Caki2 (cell line): ENCODE measurements at regions of chr4 and their contacts with region 1.

Region 1: GRCh38 chr4:140153718-140154571 is at the start of gene MAML3:
- DNase-seq: peak; percentile 93
- total RNA-seq, gene MAML3: 0.20 and 0.61 TPM in 2 replicates

Region 2: DNA sequence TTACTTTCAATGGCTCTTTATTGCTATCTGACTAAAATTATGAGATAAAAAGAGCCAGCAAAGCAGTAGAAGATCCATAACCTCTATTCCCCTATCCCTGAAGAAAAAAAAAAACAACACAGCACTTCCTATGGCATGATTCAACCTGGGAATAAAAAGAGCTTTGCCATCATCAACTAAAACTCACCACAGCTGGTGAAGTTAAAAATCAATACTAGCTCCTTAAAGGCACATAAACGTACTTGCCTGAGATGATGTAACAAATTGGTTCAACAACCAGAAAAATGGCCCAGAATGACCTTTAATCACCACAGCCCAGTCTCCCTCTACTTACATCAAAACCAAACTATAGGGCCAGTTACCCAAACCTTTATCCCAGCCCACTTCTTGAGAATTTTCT is 153.7 kb before region 1 on chr4:
- in situ Hi-C with region 1: no loop called
- DNase-seq: no peak

Region 3: DNA sequence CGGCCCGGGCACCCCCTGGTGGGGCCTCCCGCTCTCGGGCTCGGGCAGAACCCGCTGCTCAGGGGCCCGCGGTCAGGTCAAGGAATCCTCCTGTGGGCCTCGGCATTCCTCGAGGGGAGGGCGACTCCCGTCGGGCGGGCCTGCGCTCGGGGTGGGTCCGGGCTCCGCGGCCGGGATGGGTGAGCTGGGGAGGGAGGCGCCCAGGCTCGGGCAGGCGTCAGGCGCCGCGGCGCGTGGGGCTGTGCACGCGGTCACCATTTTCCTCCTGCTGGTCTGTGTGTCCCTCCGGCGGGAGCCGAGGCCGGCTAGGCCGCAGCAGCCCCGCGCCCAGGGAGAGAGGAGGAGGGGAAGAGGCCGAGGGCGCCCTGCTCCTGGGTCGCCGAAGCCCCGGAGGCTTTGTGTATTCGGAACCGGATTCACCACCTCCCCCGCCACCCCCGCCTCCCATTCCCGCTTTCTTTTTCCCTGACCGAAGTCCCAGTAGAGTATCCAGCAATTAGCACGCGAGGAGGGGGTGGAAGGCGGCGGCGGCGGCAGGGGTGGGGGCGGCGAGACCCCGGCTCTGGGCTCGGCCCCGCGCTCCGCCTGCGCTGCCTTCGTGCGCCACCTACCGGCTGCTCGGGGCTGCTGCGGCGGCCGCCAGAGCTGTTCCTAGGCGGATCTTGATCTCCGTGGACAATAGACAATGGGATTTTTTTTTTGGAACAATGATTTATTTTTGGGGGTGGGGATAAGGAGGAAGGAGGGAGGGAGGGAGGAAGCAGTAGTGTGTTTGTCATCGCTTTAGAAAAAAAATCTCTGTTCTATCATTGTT is 99.0 kb after region 1 on chr4:
- in situ Hi-C with region 1: loop called (anchors 10 kb)
- DNase-seq: peak; percentile 78

Region 4: GRCh38 chr4:140556372-140557085 is 402.6 kb after region 1 on chr4:
- in situ Hi-C with region 1: no loop called
- DNase-seq: no peak

Region 5: DNA sequence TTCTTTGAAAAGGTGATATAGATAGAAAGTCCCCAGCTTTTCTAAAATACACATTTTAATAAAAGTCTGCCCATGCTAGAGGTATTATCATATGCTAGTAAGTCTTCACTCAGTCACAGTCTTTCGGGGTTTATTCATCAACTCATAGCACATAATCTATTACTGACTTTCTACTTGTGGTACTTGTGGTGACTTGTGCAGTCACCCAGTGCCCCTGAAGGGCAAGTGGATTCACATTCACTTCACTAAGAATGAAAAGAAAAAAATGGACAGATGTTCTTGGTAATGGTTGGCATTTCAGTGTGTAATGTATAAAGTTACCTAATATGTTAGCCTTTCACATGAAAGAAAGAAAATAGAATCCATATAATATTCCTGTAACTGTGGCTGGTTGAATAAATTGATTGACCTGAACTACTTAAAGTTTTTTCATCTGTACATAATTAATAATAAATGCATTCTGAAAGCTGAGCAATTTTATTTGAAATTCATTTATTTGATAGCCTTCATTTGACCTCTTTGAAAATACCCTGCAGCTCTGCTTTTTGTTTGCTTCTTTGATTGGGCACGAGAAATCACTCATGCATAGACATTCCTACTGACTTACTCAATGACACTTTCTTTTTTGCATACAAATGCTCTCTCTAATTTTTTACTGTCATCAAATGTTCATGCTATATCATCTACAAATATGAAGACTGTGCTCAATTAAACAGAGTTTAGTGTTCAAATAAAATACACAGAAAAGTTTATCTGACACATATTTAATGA is 1027.2 kb after region 1 on chr4:
- in situ Hi-C with region 1: no loop called
- DNase-seq: peak; percentile 63